T-cell (primary cell): ENCODE measurements at regions of chr5 and their contacts with region 1.

Region 1: GRCh38 chr5:167442922-167443321 is 848.5 kb upstream of the WWC1 start:
- DNase-seq: no peak
- ATAC-seq: no peak
- H3K4me3 ChIP-seq: no peak overlapping the region
- H3K4me3 Mint-ChIP-seq: no peak overlapping the region
- H3K27ac ChIP-seq: no peak overlapping the region
- H3K27ac Mint-ChIP-seq: no peak overlapping the region
- H3K4me1 ChIP-seq: no peaks in the 10 kb centered on the region
- H3K4me1 Mint-ChIP-seq: no peaks in the 10 kb centered on the region
- H3K27me3 ChIP-seq: no peaks in the 10 kb centered on the region
- H3K27me3 Mint-ChIP-seq: no peaks in the 10 kb centered on the region

Region 2: GRCh38 chr5:167271081-167271480 is 171.8 kb before region 1 on chr5:
- CTCF ChIA-PET with region 1: no interaction called
- POLR2A ChIA-PET with region 1: no interaction called
- DNase-seq: no peak
- ATAC-seq: no peak
- H3K4me3 ChIP-seq: no peak overlapping the region
- H3K4me3 Mint-ChIP-seq: no peak overlapping the region
- H3K27ac ChIP-seq: no peak overlapping the region
- H3K27ac Mint-ChIP-seq: no peak overlapping the region
- H3K4me1 ChIP-seq: no peaks in the 10 kb centered on the region
- H3K4me1 Mint-ChIP-seq: no peaks in the 10 kb centered on the region
- H3K27me3 ChIP-seq: no peaks in the 10 kb centered on the region
- H3K27me3 Mint-ChIP-seq: no peaks in the 10 kb centered on the region

Region 3: DNA sequence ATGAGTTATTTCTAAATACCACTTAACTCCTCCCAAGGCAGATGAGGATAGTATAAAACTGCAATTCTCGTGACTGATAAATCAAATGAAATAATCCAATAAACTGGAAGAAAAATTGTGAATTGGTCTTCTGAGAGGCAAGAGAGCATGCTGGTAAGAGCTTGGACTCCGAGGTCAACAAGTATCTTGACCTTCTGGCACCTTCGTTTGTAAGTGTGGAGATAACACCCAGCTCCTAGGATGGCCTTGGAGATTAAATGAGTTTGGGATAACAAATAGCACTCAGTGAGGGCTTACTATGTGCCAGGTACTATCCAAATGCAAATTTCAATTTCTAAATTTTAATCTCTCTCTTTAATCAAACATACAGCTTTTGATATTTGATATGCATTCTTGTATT is 17.8 kb before region 1 on chr5:
- CTCF ChIA-PET with region 1: no interaction called
- POLR2A ChIA-PET with region 1: no interaction called
- DNase-seq: no peak
- ATAC-seq: no peak
- H3K4me3 ChIP-seq: no peak overlapping the region
- H3K4me3 Mint-ChIP-seq: no peak overlapping the region
- H3K27ac ChIP-seq: no peak overlapping the region
- H3K27ac Mint-ChIP-seq: no peak overlapping the region
- H3K4me1 ChIP-seq: no peaks in the 10 kb centered on the region
- H3K4me1 Mint-ChIP-seq: no peaks in the 10 kb centered on the region
- H3K27me3 ChIP-seq: no peaks in the 10 kb centered on the region
- H3K27me3 Mint-ChIP-seq: no peaks in the 10 kb centered on the region

Region 4: GRCh38 chr5:167573370-167574127 is 130.6 kb after region 1 on chr5:
- CTCF ChIA-PET with region 1: interaction called in 1 of 2 experiments, 13 read pairs
- POLR2A ChIA-PET with region 1: no interaction called
- DNase-seq: no peak
- ATAC-seq: no peak
- H3K4me3 ChIP-seq: no peak overlapping the region
- H3K4me3 Mint-ChIP-seq: peak overlapping the region in 1 of 3 donors; percentile 28
- H3K27ac ChIP-seq: no peak overlapping the region
- H3K27ac Mint-ChIP-seq: no peak overlapping the region
- H3K4me1 ChIP-seq: peaks cover 0 to 3% of the 10 kb centered on the region in 2 experiments
- H3K4me1 Mint-ChIP-seq: peaks cover 6 to 15% (median 8%) of the 10 kb centered on the region in 3 donors
- H3K27me3 ChIP-seq: peaks cover 0 to 3% of the 10 kb centered on the region in 2 experiments
- H3K27me3 Mint-ChIP-seq: peaks cover 19 to 23% of the 10 kb centered on the region in 2 donors